Esophagus muscularis mucosa (tissue), 4 donors: ENCODE measurements at regions of chr13 and their contacts with region 1.

Region 1: GRCh38 chr13:74287724-74288169 is 153.5 kb upstream of the KLF12 start:
- DNase-seq: no peak
- H3K4me3 ChIP-seq: peak overlapping the region in 2 of 4 donors; percentile 22 to 36
- H3K27ac ChIP-seq: peak overlapping the region in 2 of 4 donors; percentile 8 to 32
- H3K4me1 ChIP-seq: peaks cover 19 to 47% (median 42%) of the 10 kb centered on the region in 4 donors
- H3K27me3 ChIP-seq: no peaks in the 10 kb centered on the region
- CTCF ChIP-seq: no peak
- EP300 ChIP-seq: no peak
- POLR2A ChIP-seq: no peak

Region 2: DNA sequence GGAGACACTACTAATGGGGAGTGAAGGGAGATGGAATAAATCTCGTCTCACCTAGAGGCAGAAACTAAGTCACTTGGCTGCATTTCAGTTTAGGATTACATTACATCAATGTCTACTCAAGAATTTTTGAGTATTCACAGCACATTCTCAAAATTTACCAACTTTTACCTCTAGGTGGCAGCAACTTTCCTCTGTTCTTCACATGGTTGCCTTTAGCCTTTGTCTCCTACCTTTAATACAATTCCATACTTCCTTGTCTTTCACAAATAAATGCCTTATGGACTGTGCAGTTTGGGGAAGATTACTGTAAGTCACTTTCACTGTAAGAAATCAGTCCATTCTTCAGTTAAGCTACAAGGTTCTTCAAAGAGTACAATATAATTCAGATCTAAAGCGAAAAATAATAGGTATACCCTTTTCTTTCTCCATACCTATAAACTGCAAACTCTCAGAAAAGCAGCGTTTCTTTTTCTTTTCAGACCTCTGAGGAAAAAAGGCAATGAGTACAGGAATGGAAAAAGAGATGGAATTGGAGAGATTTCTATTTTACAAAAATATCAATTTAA is 532.9 kb before region 1 on chr13:
- intact Hi-C with region 1: loop called (anchors 5 kb)
- DNase-seq: no peak
- H3K4me3 ChIP-seq: no peak overlapping the region
- H3K27ac ChIP-seq: no peak overlapping the region
- H3K4me1 ChIP-seq: peaks cover 0 to 56% (median 42%) of the 10 kb centered on the region in 4 donors
- H3K27me3 ChIP-seq: no peaks in the 10 kb centered on the region
- CTCF ChIP-seq: peak; percentile 54 to 69 (median 64)
- EP300 ChIP-seq: no peak
- POLR2A ChIP-seq: no peak

Region 3: DNA sequence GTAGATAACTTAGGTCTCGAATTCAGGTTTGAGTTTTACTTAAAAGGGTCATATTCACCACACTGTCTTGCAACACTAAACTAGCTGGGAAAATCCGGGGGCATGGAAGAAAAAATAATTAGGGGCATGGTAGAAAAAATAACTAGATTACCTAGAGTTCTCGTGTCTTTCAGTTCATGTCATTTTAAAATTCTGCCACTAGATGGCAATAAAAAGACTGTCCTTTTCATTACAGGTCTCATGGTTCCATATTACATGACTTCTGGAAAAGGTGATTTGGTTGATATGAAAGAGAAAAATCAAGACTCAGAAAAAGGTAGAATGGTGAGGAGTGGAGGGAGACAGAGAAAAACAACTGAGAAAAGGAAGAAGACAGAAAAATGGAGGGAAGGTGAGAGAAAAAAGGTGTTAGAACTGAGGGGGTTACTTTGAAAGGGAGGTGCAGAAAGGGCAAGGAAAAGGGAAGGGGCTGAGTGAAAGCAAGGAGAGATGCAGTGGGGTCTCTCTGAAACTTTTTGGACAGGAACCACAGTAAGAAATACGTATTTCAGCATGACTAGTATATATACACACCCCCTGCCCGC is 452.5 kb before region 1 on chr13:
- intact Hi-C with region 1: loop called (anchors 10 kb)
- DNase-seq: no peak
- H3K4me3 ChIP-seq: no peak overlapping the region
- H3K27ac ChIP-seq: no peak overlapping the region
- H3K4me1 ChIP-seq: peaks cover 0 to 25% (median 12%) of the 10 kb centered on the region in 4 donors
- H3K27me3 ChIP-seq: no peaks in the 10 kb centered on the region
- CTCF ChIP-seq: peak; percentile 64 to 73 (median 68)
- EP300 ChIP-seq: no peak
- POLR2A ChIP-seq: no peak

Region 4: DNA sequence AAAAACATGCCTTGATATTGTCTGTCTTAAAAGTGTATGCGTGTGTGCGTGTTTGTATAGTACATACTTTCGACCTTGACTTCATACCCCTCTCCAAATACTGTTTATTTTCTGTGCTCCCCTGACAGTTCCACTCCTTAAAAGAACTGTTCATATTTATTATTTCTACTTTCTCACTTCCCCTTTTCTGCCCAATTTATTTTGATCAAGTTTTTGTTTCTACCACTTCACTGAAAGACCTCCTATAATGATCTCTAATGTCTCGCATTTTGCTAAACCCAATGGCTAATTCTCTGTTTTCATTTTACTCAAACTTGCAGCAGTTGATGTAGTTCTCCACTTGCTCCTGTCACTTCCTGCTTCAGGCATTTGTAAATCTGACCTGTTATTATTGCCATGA is 272.6 kb after region 1 on chr13:
- intact Hi-C with region 1: no loop called
- DNase-seq: no peak
- H3K4me3 ChIP-seq: no peak overlapping the region
- H3K27ac ChIP-seq: no peak overlapping the region
- H3K4me1 ChIP-seq: no peaks in the 10 kb centered on the region
- H3K27me3 ChIP-seq: no peaks in the 10 kb centered on the region
- CTCF ChIP-seq: no peak
- EP300 ChIP-seq: no peak
- POLR2A ChIP-seq: no peak